ENCODE measurements at regions of chr12 and their contacts with region 1.

Region 1: GRCh38 chr12:121712461-121713256 is at the start of gene TMEM120B:
- DNase-seq: peak; percentile 37
- ATAC-seq: peak; percentile 73
- H3K4me3 ChIP-seq: peak within 1 kb of the TSS; percentile 60 to 97 (median 91)
- H3K27ac ChIP-seq: peak within 1 kb of the TSS; percentile 77
- H3K4me1 ChIP-seq: peaks cover 80% of the 10 kb centered on the region
- H3K27me3 ChIP-seq: no peaks in the 10 kb centered on the region; a peak in 1 of 5 replicates
- CTCF ChIP-seq: peak; percentile 15; the same call in 1 of the 2 replicates
- EP300 ChIP-seq: no peak
- POLR2A ChIP-seq: peak; percentile 78 to 88
- RAD21 ChIP-seq: peak; percentile 39; the same call in 1 of the 2 replicates
- total RNA-seq, gene TMEM120B: 3.8 and 7.1 TPM in 2 replicates

Region 2: DNA sequence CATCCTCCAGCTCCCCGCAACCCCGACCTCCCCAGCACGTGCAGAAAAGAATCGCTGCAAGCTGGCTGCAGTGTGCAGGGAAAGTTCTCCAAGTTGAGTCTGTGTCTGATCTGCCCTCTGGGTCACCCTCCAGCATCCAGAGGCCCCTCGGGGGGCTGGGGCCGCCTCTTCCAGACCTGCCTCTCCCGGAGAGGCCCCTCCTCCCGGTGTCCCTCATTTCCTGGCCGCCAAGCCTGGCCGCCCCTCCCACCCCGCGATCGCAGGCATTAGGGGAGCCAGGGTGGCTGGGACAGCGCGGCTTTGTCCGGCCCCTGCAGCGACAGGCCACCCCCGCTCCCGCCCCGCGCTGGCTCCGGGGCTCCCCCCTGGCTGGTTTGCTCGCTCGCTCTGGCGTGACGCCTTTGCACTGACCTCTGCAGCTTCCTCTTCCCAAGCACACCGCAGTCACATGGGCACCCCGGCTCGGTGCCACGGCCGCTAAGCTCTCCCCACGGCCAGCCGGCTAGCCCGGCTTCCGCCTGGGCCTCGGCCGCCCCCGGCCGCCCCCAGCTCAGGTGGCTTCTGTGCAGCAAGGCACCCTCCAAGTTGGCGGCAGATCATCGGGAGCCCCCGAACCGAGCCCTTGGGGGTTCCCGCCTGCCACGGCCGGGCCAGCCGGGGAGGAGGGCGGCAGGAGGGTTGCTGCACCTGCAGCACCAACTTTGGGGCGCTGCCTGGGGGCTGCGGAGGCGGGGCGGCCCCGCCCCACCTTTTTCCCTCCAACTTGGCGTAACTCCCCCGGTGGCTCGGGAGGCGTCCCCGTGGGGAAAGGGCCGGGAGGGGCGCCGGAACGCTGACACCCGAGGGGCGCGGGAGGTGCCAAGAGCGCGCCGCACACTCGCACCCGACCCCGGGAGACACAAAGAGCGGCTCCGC is 175.5 kb before region 1 on chr12:
- CTCF ChIA-PET with region 1: no interaction called
- POLR2A ChIA-PET with region 1: no interaction called
- in situ Hi-C with region 1: no loop called
- intact Hi-C with region 1: no loop called
- DNase-seq: peak; percentile 76
- ATAC-seq: peak; percentile 86
- H3K4me3 ChIP-seq: peak overlapping the region; percentile 62 to 75 (median 65); a peak in 5 of 6 replicates
- H3K27ac ChIP-seq: peak overlapping the region; percentile 78
- H3K4me1 ChIP-seq: peaks cover 39% of the 10 kb centered on the region
- H3K27me3 ChIP-seq: no peaks in the 10 kb centered on the region
- CTCF ChIP-seq: no peak; the same call in 1 of the 2 replicates
- EP300 ChIP-seq: 0 out of 4 replicates have a peak, but pooled peaks of 1 of the 2 experiments have one; percentile 30
- POLR2A ChIP-seq: peak; percentile 67 to 70
- RAD21 ChIP-seq: no peak; the same call in 1 of the 2 replicates

Region 3: DNA sequence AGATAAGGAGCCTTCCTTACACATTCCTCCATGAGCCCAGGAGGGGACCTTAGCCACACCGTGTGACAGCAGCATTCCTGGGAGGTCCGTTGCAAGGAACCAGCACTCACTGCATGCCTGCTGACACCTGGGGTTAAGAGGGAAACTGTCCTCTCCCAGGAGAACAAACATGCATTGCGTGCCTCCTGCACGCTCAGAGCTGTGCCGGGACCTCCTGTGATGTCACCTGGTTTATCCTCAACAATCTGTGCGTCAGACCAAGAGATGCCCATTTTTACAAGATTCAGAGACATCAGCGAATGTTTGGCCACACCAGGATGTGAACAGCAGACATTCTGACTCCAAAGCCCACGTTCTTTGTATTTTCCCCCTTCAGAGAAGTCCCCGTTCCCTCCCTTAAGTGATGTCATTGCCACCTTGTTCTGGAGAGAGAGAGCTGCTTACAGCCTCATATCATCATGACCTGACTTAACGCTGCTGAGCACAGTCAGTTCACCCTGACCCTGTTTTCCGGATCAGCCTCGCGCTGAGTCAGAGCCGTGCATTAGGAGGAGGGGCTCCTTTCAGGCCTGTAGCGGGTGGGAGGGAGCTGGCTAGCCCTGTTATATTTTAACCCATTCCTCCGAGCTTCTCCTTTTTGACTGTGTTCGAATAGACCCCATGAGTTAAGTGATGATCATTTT is 36.1 kb after region 1 on chr12:
- CTCF ChIA-PET with region 1: no interaction called
- POLR2A ChIA-PET with region 1: interaction called, 15 read pairs
- in situ Hi-C with region 1: no loop called
- intact Hi-C with region 1: no loop called
- DNase-seq: peak; percentile 88
- ATAC-seq: peak; percentile 97
- H3K4me3 ChIP-seq: peak overlapping the region in 1 of 3 experiments; percentile 45; a peak in 2 of 6 replicates
- H3K27ac ChIP-seq: peak overlapping the region; percentile 69
- H3K4me1 ChIP-seq: peaks cover 49% of the 10 kb centered on the region
- H3K27me3 ChIP-seq: no peaks in the 10 kb centered on the region
- CTCF ChIP-seq: no peak
- EP300 ChIP-seq: peak in 1 of 2 experiments; percentile 19; a peak in 2 of 4 replicates
- POLR2A ChIP-seq: 0 out of 4 replicates have a peak, but pooled peaks of 1 of the 2 experiments have one; percentile 26
- RAD21 ChIP-seq: no peak

Region 4: GRCh38 chr12:121839106-121839992 is 126.7 kb after region 1 on chr12:
- CTCF ChIA-PET with region 1: no interaction called
- POLR2A ChIA-PET with region 1: no interaction called
- in situ Hi-C with region 1: no loop called
- intact Hi-C with region 1: no loop called
- DNase-seq: no peak
- ATAC-seq: peak; percentile 24
- H3K4me3 ChIP-seq: no peak overlapping the region
- H3K27ac ChIP-seq: no peak overlapping the region
- H3K4me1 ChIP-seq: peaks cover 18% of the 10 kb centered on the region
- H3K27me3 ChIP-seq: no peaks in the 10 kb centered on the region
- CTCF ChIP-seq: no peak
- EP300 ChIP-seq: no peak
- POLR2A ChIP-seq: no peak
- RAD21 ChIP-seq: no peak

Measured in HepG2 (cell line).